Heart right ventricle (tissue), 16 donors: ENCODE measurements at regions of chr15 and their contacts with region 1.

Region 1: DNA sequence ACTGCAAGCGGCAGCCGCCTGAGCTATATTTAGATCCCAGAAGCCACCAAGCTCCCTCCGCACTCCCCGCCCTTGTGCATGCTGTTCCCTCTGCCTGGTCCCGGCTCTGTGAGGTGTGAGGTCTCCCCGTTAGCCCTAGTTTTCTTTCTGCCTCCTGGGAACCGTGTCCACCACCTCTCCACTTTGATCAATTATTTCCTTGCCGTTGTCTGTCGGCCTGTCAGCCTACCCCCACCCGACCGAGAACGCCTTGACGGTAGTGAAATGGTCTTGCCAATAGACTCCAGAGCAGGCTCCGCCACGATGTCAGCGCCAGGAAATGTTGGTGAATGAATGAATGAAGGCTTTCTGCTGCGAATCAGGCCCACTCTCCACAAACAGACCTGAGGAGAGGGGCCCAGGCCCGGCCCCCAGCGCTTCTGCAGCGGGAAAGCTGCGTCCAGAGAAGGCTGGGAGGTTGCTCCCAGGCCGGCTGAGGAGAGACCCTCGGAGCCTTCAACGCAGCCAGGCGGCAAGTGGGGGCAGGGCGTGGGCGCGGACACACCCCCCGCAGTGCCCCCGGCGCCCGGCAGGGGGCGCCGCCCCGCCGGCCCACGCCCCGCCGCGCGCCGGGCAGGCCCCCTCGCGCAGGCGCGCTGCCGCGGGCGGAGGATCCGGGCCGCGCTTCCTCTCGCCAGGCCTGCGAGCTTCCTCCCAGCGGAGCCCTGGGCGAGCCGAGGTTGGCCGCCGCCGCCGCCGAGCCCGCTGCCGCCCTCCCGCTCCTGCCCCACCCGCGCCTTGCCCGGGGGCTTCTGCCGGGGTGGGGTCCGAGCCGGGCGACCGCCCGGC is at the start of gene CSK:
- DNase-seq: peak; percentile 71 to 87
- ATAC-seq: peak; percentile 19 to 78 (median 52)
- H3K4me3 ChIP-seq: peak within 1 kb of the TSS; percentile 19 to 94 (median 78)
- H3K27ac ChIP-seq: peak within 1 kb of the TSS; percentile 87 to 98 (median 93)
- H3K4me1 ChIP-seq: peaks cover 44 to 90% (median 70%) of the 10 kb centered on the region in 9 donors
- H3K27me3 ChIP-seq: no peaks in the 10 kb centered on the region
- CTCF ChIP-seq: peak; percentile 51 to 83 (median 63)
- total RNA-seq, gene CSK: 20.3 to 48.6 (median 24.8) TPM

Region 2: DNA sequence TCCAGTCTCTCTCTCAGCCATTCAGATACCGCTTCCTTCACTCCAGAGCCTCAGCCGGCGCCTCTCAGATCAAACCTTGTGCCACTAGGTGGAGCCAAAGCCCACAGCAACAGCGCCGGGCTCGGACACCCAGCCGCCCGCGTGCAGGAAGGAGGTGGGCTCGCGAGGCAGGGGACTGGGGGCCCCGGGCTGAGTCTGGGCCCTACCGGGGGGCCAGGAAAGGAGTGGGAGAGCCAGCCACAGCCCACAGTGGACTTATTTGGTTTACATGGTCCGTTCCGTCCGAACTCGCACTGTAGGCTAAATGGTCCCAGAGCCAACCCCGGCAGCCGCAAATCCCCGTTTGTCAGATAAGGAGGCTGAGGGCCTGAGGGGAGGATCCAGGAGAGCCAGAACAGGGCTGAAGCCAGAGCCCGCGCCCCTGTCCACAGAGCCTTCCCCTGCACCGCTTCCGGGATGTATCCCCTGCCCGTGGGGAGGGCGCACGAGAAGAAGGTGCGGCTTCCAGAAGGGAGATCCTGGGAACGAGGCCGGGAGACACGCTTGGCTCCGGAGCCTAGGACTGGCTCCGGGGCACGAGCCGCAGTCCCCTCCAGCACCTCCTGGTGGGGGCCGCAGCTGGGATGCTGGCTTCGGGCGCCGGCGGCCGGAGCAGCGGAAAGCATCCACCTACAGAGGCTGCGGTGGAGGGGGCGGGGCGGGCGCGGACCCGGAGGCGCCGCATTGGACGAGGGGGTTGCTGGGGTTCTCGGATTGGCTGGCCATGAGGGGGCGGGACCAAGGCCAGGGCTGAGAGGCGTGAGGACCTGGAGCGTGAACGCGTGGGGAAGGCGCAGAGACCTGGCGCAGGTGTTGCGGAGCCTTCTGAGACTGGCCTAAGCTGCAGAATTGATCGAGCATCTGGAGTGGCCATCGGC is 407.7 kb before region 1 on chr15:
- intact Hi-C with region 1: loop called in 1 of 10 experiments (anchors 10 kb)
- DNase-seq: peak; percentile 91 to 93
- ATAC-seq: peak; percentile 96 to 99 (median 98)
- H3K4me3 ChIP-seq: peak overlapping the region; percentile 29 to 80 (median 62)
- H3K27ac ChIP-seq: peak overlapping the region in 1 of 10 donors; percentile 66
- H3K4me1 ChIP-seq: peaks cover 7 to 28% (median 16%) of the 10 kb centered on the region in 9 donors
- H3K27me3 ChIP-seq: peaks cover 0 to 23% (median 4%) of the 10 kb centered on the region in 7 donors
- CTCF ChIP-seq: peak; percentile 83 to 93 (median 92)

Region 3: DNA sequence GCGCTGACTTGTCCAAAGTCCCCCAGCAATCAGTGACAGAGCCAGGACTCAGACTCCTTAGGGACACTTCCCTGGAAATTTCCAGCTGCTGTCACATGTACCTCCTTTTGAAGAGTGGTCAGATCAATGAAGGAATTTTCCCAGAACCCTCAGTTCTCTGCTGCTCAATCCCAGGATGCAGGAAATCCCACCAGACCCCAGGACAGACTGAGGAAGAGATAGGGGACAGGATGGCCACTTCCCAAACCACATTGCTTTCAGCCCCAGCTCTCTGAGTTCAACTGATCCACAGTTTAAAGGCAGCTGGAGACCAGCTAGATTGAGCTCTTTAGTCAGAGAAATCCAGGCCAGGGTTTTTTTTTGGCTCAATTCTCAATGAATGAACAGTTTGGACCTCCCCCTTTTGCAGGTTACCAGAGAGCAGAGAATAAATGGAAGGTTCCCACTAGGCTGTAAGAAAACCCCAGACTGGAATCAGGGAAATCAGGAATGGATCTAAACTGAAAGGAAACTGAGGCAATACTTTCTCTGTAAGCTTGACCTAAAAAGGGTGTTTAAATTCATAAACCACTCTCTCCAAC is 57.8 kb before region 1 on chr15:
- intact Hi-C with region 1: no loop called
- DNase-seq: peak in 1 of 2 donors; percentile 19
- ATAC-seq: peak in 5 of 8 donors; percentile 47 to 64 (median 59)
- H3K4me3 ChIP-seq: no peak overlapping the region
- H3K27ac ChIP-seq: no peak overlapping the region
- H3K4me1 ChIP-seq: peaks cover 3 to 31% (median 21%) of the 10 kb centered on the region in 9 donors
- H3K27me3 ChIP-seq: peaks cover 0 to 46% (median 0%) of the 10 kb centered on the region in 7 donors
- CTCF ChIP-seq: no peak

Region 4: DNA sequence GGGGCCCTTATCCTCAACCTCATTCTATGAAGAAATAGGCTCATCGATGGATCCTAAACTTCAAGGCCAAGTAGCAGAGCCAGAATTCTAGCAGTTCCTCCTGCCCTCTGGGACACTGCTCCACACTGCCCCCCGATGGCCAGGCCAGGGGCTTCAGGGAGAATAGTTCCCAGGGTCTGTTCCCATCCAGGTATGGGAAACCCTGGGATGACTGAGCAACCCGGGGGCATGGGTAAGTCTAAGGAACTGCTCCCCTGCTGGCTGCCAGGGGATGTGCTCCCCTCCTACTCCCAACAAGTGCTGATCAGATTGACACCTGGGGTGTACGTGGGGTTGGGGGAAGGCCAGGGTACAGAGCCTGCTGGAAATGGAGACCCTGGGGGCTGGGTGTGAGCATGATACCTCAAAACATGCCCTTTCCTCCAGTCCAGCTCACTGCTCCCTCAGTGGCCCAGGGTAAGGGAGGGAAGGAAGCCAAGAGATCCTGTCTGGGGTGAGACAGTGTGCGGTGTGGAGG is 53.7 kb after region 1 on chr15:
- intact Hi-C with region 1: loop called in 6 of 10 experiments (anchors 2 to 10 kb)
- DNase-seq: peak; percentile 49 to 69
- ATAC-seq: peak in 6 of 8 donors; percentile 30 to 51 (median 39)
- H3K4me3 ChIP-seq: no peak overlapping the region
- H3K27ac ChIP-seq: no peak overlapping the region
- H3K4me1 ChIP-seq: peaks cover 0 to 20% (median 8%) of the 10 kb centered on the region in 9 donors
- H3K27me3 ChIP-seq: no peaks in the 10 kb centered on the region
- CTCF ChIP-seq: peak; percentile 53 to 83 (median 76)

Region 5: DNA sequence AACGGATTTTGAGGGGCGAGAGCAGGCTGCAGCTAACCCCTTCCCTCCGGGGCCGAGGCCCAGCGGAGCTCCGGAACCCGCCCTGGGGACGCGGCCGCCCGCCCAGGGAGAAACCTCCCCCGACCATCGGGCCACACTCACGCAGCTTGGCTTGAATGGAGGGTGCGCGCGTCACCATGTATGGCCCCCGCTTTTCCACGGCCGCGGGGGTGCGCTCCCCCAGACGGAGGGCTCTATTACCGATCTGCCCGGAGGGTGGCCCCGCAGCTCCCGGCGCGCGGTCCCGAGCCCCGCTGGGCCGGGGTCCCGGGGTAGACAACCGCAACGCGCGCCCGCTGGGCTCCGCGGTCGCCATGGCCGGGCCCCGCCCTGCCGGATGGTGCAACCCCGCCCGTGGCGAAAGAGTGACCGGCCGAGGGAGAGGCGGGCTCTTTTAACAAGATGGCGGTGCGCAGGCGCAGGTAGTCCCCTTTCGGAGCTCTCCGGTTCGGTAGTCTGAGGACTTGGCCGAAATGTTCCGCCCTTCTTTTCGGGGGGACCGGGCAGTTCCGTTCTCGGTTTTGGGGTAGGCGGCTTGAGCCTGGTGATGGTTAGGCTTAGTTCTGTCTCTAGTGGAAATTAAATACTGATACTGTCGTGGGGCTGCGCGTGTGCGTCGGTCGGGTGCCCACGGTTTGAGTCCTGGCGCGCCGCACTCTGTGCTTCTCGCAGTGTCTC is 125.0 kb after region 1 on chr15 and contains the start of gene FAM219B:
- intact Hi-C with region 1: loop called in 2 of 10 experiments (anchors 5 to 10 kb)
- DNase-seq: peak; percentile 94 to 95
- ATAC-seq: peak; percentile 92 to 97 (median 96)
- H3K4me3 ChIP-seq: peak within 1 kb of the TSS; percentile 66 to 99 (median 86)
- H3K27ac ChIP-seq: peak within 1 kb of the TSS; percentile 91 to 99 (median 96)
- H3K4me1 ChIP-seq: peaks cover 10 to 36% (median 26%) of the 10 kb centered on the region in 9 donors
- H3K27me3 ChIP-seq: no peaks in the 10 kb centered on the region
- CTCF ChIP-seq: no peak
- total RNA-seq, gene FAM219B: 73.1 to 159 (median 98.7) TPM

Region 6: GRCh38 chr15:75201609-75202250 is 420.1 kb after region 1 on chr15 and contains the start of gene C15orf39:
- intact Hi-C with region 1: loop called in 1 of 10 experiments (anchors 10 kb)
- DNase-seq: peak; percentile 63 to 80
- ATAC-seq: peak; percentile 66 to 84 (median 76)
- H3K4me3 ChIP-seq: peak within 1 kb of the TSS; percentile 60 to 100 (median 88)
- H3K27ac ChIP-seq: peak within 1 kb of the TSS; percentile 89 to 100 (median 96)
- H3K4me1 ChIP-seq: peaks cover 31 to 78% (median 65%) of the 10 kb centered on the region in 9 donors
- H3K27me3 ChIP-seq: no peaks in the 10 kb centered on the region
- CTCF ChIP-seq: peak; percentile 75 to 96 (median 94)
- total RNA-seq, gene C15orf39: 6.9 to 23.7 (median 14.8) TPM